K562 (cell line): ENCODE measurements at regions of chr6 and their contacts with region 1.

Region 1: GRCh38 chr6:37102279-37103168 is 67.4 kb upstream of the PIM1 start:
- DNase-seq: peak; percentile 81 to 87 (median 84)
- ATAC-seq: peak; percentile 83
- H3K4me3 ChIP-seq: peak overlapping the region; percentile 33
- H3K27ac ChIP-seq: peak overlapping the region; percentile 63
- H3K4me1 ChIP-seq: peaks cover 45 to 56% of the 10 kb centered on the region in 2 experiments
- H3K27me3 ChIP-seq: no peaks in the 10 kb centered on the region
- CTCF ChIP-seq: 0 out of 6 replicates have a peak, but pooled peaks of 1 of the 3 experiments have one; percentile 0
- EP300 ChIP-seq: no peak
- POLR2A ChIP-seq: peak; percentile 37; the same call in 1 of the 2 replicates
- RAD21 ChIP-seq: no peak; a peak in 2 of 4 replicates

Region 2: GRCh38 chr6:36912586-36912985 is 189.9 kb before region 1 on chr6:
- CTCF ChIA-PET with region 1: no interaction called
- POLR2A ChIA-PET with region 1: no interaction called
- in situ Hi-C with region 1: no loop called
- intact Hi-C with region 1: no loop called
- DNase-seq: no peak
- ATAC-seq: peak; percentile 32; the same call in 2 of the 3 replicates
- H3K4me3 ChIP-seq: no peak overlapping the region
- H3K27ac ChIP-seq: no peak overlapping the region
- H3K4me1 ChIP-seq: peaks cover 0 to 10% of the 10 kb centered on the region in 2 experiments; a peak in 3 of 5 replicates
- H3K27me3 ChIP-seq: no peaks in the 10 kb centered on the region
- CTCF ChIP-seq: no peak
- EP300 ChIP-seq: no peak
- POLR2A ChIP-seq: no peak
- RAD21 ChIP-seq: no peak

Region 3: DNA sequence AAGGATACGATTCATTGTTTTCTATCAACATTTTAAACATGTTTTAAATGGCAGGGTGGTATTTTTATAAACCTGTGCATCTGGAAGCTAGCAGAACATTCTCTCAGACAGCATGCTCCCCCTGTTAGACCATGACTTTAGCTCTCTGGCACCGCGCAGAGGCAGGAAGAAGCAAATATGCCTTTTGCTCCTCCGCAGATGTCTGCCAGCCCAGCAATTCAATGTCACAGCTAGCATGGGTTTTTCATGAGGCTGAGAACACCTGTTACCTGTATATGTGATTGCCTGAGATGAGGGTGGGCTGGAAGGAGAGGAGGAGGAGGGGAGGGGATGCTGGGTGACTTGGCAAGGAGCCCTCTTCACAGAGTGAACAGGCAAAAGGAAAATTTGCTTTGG is 123.2 kb before region 1 on chr6:
- CTCF ChIA-PET with region 1: no interaction called
- POLR2A ChIA-PET with region 1: no interaction called
- in situ Hi-C with region 1: no loop called
- intact Hi-C with region 1: no loop called
- DNase-seq: peak in 1 of 4 experiments; percentile 20
- ATAC-seq: peak; percentile 42
- H3K4me3 ChIP-seq: no peak overlapping the region
- H3K27ac ChIP-seq: no peak overlapping the region
- H3K4me1 ChIP-seq: peaks cover 9 to 14% of the 10 kb centered on the region in 2 experiments
- H3K27me3 ChIP-seq: no peaks in the 10 kb centered on the region
- CTCF ChIP-seq: peak; percentile 17 to 46 (median 33); a peak in 2 of 6 replicates
- EP300 ChIP-seq: no peak
- POLR2A ChIP-seq: no peak
- RAD21 ChIP-seq: peak in 1 of 2 experiments; percentile 47; a peak in 3 of 4 replicates

Region 4: GRCh38 chr6:37059344-37060206 is 42.9 kb before region 1 on chr6:
- CTCF ChIA-PET with region 1: interaction called, 3 read pairs
- POLR2A ChIA-PET with region 1: interaction called, 4 read pairs
- in situ Hi-C with region 1: no loop called
- intact Hi-C with region 1: loop called (anchors 1 kb)
- DNase-seq: peak; percentile 92 to 97 (median 94)
- ATAC-seq: peak; percentile 85
- H3K4me3 ChIP-seq: no peak overlapping the region
- H3K27ac ChIP-seq: peak overlapping the region; percentile 86
- H3K4me1 ChIP-seq: peaks cover 48 to 61% of the 10 kb centered on the region in 2 experiments
- H3K27me3 ChIP-seq: no peaks in the 10 kb centered on the region
- CTCF ChIP-seq: peak; percentile 81 to 93 (median 87)
- EP300 ChIP-seq: peak; percentile 95
- POLR2A ChIP-seq: peak; percentile 61
- RAD21 ChIP-seq: peak; percentile 92 to 96

Region 5: DNA sequence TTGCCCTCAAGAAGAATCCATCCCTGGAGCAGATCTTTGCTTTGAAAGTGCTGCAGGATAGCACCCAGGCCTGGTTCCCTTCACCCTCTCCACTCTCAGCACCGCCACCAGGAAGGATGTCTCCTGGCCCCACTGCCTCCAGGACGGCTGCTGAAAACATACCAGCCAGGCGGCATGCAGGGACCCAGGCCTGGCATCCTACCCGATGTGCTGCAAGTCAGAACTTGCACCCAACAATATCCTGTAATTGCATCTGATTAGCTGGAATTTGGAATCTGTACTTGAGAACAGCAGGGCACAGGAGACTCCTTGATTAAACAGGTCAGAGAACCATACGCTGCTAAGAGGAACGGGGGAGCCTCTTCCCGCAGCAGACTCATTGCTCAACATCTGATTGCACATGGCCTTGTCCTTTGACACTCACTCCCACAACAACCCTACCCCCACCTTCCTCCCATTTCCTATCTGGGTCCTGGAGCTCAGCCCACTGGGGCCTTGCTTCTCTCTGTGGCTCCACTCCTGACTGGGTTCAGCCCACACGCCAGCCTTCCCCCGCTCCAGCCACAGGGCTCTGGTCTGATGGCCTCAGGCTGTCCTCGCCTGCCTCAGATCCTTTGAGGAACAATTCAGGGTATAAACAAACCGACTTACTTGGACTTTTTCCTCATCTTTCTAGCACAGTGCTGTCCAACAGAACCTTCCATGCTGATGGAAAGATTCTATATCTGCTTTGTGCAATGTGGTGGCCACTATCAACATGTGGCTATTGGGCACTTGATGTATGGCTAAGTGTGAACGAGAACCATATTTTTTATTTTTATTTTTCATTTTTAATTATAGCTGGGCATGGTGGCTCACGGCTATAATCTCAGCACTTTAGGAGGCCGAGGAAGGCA is 19.0 kb before region 1 on chr6:
- CTCF ChIA-PET with region 1: no interaction called
- POLR2A ChIA-PET with region 1: interaction called, 3 read pairs
- in situ Hi-C with region 1: no loop called
- intact Hi-C with region 1: loop called (anchors 2 kb)
- DNase-seq: peak; percentile 90 to 95 (median 94)
- ATAC-seq: peak; percentile 93
- H3K4me3 ChIP-seq: no peak overlapping the region
- H3K27ac ChIP-seq: peak overlapping the region; percentile 77
- H3K4me1 ChIP-seq: peaks cover 22 to 36% of the 10 kb centered on the region in 2 experiments
- H3K27me3 ChIP-seq: no peaks in the 10 kb centered on the region
- CTCF ChIP-seq: 0 out of 6 replicates have a peak, but pooled peaks of 1 of the 3 experiments have one; percentile 1
- EP300 ChIP-seq: peak; percentile 87
- POLR2A ChIP-seq: peak; percentile 58; the same call in 1 of the 2 replicates
- RAD21 ChIP-seq: peak; percentile 43 to 61

Region 6: GRCh38 chr6:37149745-37150144 is 47.2 kb after region 1 on chr6:
- CTCF ChIA-PET with region 1: no interaction called
- POLR2A ChIA-PET with region 1: no interaction called
- in situ Hi-C with region 1: no loop called
- intact Hi-C with region 1: no loop called
- DNase-seq: no peak
- ATAC-seq: no peak
- H3K4me3 ChIP-seq: no peak overlapping the region
- H3K27ac ChIP-seq: no peak overlapping the region
- H3K4me1 ChIP-seq: peaks cover 0 to 1% of the 10 kb centered on the region in 2 experiments; a peak in 2 of 5 replicates
- H3K27me3 ChIP-seq: no peaks in the 10 kb centered on the region
- CTCF ChIP-seq: no peak
- EP300 ChIP-seq: no peak
- POLR2A ChIP-seq: no peak
- RAD21 ChIP-seq: no peak

Region 7: GRCh38 chr6:37160922-37161778 is 58.6 kb after region 1 on chr6:
- CTCF ChIA-PET with region 1: no interaction called
- POLR2A ChIA-PET with region 1: no interaction called
- in situ Hi-C with region 1: no loop called
- intact Hi-C with region 1: no loop called
- DNase-seq: peak in 1 of 4 experiments; percentile 7
- ATAC-seq: peak; percentile 23; the same call in 2 of the 3 replicates
- H3K4me3 ChIP-seq: no peak overlapping the region
- H3K27ac ChIP-seq: peak overlapping the region; percentile 40; the same call in 1 of the 3 replicates
- H3K4me1 ChIP-seq: peaks cover 16 to 23% of the 10 kb centered on the region in 2 experiments; a peak in 4 of 5 replicates
- H3K27me3 ChIP-seq: no peaks in the 10 kb centered on the region
- CTCF ChIP-seq: no peak
- EP300 ChIP-seq: no peak
- POLR2A ChIP-seq: no peak
- RAD21 ChIP-seq: no peak

Region 8: GRCh38 chr6:37182736-37183590 is 80.4 kb after region 1 on chr6:
- CTCF ChIA-PET with region 1: no interaction called
- POLR2A ChIA-PET with region 1: no interaction called
- in situ Hi-C with region 1: no loop called
- intact Hi-C with region 1: loop called (anchors 1 kb)
- DNase-seq: peak; percentile 65 to 99 (median 78)
- ATAC-seq: peak; percentile 90
- H3K4me3 ChIP-seq: no peak overlapping the region
- H3K27ac ChIP-seq: peak overlapping the region; percentile 97
- H3K4me1 ChIP-seq: peaks cover 58 to 65% of the 10 kb centered on the region in 2 experiments
- H3K27me3 ChIP-seq: no peaks in the 10 kb centered on the region
- CTCF ChIP-seq: no peak
- EP300 ChIP-seq: peak; percentile 100
- POLR2A ChIP-seq: peak; percentile 60
- RAD21 ChIP-seq: peak; percentile 29 to 43; a peak in 3 of 4 replicates